ENCODE measurements at regions of chr9 and their contacts with region 1.

Region 1: DNA sequence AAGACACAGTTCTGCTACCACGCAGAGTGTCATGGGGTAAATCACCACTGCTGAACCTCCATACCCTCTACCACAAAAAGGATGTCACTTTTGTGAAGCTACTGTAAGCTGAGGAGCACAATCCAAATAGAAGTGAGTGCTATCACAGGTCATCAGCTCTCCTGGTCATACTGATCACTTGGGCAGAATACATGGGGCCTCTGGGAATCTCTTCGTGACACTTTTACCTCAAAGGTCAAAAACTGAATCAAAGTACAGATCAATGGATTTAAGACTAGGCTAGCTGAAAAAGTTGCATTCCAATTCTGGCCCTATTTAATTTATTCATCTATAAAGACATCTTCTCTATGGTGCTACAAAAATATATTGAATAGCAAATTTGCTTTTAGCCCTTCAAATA is 115.5 kb downstream of the MPDZ start:
- DNase-seq: no peak
- ATAC-seq: no peak

Region 2: DNA sequence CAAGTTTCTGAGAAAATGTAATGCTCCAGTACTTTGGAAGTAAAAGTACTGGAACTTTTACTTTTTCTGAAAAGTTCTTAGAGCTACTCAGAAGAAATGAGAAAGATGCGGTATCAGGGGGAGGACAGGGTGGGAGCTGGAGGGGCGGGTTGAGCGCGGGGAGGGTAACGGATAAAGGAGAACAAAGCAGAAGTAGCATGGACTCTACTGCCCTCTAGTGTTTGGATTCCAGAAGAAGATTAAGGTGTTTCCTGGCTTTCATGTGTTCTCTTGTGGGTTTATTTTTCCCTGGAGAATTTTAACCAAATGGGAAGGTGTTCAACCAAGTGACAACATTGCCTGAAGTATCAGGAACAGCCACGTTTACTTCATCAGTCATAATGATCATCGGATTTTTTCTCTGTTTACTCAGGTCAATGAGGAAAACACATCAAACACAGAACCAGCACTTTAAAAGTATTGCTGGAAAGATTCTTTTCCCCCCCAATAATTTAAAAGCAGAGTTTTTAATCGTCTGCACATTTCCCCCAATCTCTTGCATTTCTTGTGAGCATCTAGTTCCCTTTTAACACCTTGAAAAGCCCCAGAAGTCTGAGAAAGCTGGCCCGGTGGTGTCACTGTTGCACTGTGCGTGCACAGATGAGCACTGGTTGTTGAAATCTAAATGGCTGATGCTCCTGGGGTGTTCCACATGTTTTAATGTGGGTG is 75.1 kb before region 1 on chr9:
- intact Hi-C with region 1: no loop called
- DNase-seq: no peak
- ATAC-seq: peak; percentile 68

Region 3: GRCh38 chr9:13149454-13149853 is 14.5 kb before region 1 on chr9:
- intact Hi-C with region 1: loop called (anchors 1 kb)
- DNase-seq: no peak
- ATAC-seq: no peak